Posterior cingulate gyrus (tissue), 11 donors: ENCODE measurements at regions of chr19 and their contacts with region 1.

Region 1: GRCh38 chr19:8444645-8445487 is at the start of gene HNRNPM:
- DNase-seq: peak; percentile 99 to 100 (median 100)

Region 2: GRCh38 chr19:8389891-8390616 is 54.8 kb before region 1 on chr19 and contains the start of gene RAB11B:
- intact Hi-C with region 1: loop called (anchors 2 kb)
- DNase-seq: peak; percentile 98 to 100 (median 99)

Region 3: GRCh38 chr19:8473648-8474476 is 29.0 kb after region 1 on chr19:
- intact Hi-C with region 1: no loop called
- DNase-seq: no peak